ENCODE measurements at regions of chr9 and their contacts with region 1.

Region 1: DNA sequence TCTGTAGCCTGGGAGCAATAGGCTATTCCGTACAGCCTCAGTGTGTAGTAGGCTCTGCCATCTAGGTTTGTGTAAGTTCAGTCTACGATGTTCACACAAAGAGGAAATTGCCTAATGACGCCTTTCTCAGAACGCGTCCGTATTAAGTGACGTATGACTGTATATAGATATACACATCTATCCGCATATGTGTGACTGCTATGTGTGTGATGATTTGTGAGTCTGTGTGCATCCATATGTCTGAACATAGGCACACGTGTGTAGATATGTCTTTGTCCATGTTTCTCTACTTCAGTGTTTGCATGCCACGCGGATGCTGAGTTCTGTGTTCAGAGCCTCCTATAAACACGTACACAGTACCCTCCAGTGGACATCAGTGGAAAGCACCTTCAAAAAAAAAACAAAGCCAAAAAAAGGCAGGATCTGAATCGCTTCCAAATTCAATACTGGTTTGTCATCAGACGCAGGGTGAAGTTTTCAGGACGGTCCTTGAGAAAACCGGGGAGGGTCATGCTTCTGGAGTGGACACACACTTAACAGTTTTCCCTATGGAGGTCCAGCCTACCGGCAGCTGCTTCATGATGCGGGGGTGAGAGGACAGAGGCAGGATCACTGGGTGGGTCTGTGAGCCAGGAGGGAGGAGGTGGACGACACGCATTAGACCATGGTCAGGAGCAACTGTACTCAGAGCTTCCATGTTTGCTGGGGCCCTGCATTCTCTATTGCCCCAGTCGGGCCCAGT is 29.5 kb upstream of the ALDH1B1 start:
- DNase-seq: peak; percentile 66
- H3K4me3 ChIP-seq: no peak overlapping the region
- H3K27ac ChIP-seq: no peak overlapping the region
- H3K4me1 ChIP-seq: no peaks in the 10 kb centered on the region
- H3K27me3 ChIP-seq: peaks cover 2 to 3% of the 10 kb centered on the region in 2 experiments
- CTCF ChIP-seq: peak; percentile 47 to 55
- POLR2A ChIP-seq: no peak

Region 2: GRCh38 chr9:38284588-38285051 is 78.4 kb before region 1 on chr9:
- CTCF ChIA-PET with region 1: no interaction called
- POLR2A ChIA-PET with region 1: no interaction called
- dilution Hi-C with region 1: no loop called
- intact Hi-C with region 1: loop called (anchors 2 kb)
- DNase-seq: no peak
- H3K4me3 ChIP-seq: no peak overlapping the region
- H3K27ac ChIP-seq: no peak overlapping the region
- H3K4me1 ChIP-seq: no peaks in the 10 kb centered on the region
- H3K27me3 ChIP-seq: peaks cover 0 to 9% of the 10 kb centered on the region in 2 experiments
- CTCF ChIP-seq: no peak
- POLR2A ChIP-seq: no peak